GM12878 (cell line): ENCODE measurements at regions of chr14 and their contacts with region 1.

Region 1: GRCh38 chr14:54805521-54806322 is 96.9 kb downstream of the GCH1 start:
- DNase-seq: peak; percentile 27
- ATAC-seq: peak; percentile 96
- H3K4me3 ChIP-seq: no peak overlapping the region
- H3K27ac ChIP-seq: no peak overlapping the region
- H3K4me1 ChIP-seq: no peaks in the 10 kb centered on the region
- H3K27me3 ChIP-seq: no peaks in the 10 kb centered on the region
- CTCF ChIP-seq: peak; percentile 91 to 94 (median 93)
- EP300 ChIP-seq: no peak
- POLR2A ChIP-seq: no peak
- RAD21 ChIP-seq: peak; percentile 89

Region 2: DNA sequence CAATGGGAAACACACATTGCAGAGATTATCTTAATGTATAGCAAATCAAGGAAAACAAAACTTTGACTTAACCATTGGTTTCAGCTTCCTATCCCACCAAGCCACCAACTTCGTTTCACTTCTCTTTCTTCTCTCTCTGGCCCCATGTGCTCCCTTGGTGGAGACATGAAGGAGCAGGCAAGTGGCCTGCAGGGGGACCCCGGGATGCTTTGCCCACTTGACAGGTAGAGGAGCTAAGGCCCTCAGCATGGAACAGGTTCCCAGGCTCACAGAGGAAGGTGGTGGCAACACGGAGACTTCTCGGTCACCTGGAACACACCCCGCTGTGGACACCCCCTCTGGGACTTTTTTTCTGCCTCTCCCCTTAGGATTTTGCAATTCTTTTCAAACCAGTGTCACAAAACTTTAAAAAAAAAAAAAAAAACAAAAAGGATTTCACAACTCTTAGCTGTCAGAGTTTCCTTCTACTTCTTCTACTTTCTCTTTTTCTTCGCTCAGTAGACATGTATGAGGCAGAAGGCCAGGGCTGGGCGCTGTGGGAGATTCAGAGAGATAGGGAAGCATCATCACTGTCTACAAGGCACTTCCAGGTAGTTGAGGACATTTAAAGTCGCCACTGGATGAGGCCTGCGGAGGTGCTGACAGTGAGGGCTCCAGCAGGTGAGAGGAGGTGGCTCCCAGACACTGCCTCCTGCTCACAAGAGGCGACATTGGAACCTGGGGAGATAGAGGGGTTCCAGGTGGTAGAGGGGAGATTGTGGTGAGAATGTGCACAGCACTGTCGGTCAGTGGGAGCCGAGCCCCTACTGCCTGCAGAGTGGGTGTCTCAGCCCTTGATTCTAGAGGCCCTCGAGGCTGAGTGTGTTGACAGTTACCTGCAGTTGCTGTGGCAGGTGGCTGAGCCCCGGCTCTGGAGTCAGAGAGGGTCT is 22.7 kb before region 1 on chr14:
- CTCF ChIA-PET with region 1: interaction called, 11 read pairs
- POLR2A ChIA-PET with region 1: no interaction called
- RAD21 ChIA-PET with region 1: interaction called, 6 read pairs
- SMC1A ChIA-PET with region 1: interaction called, 5 read pairs
- in situ Hi-C with region 1: no loop called
- intact Hi-C with region 1: loop called (anchors 2 kb)
- DNase-seq: no peak
- ATAC-seq: peak; percentile 99
- H3K4me3 ChIP-seq: no peak overlapping the region
- H3K27ac ChIP-seq: no peak overlapping the region
- H3K4me1 ChIP-seq: peaks cover 10% of the 10 kb centered on the region
- H3K27me3 ChIP-seq: no peaks in the 10 kb centered on the region
- CTCF ChIP-seq: peak; percentile 59 to 76 (median 66)
- EP300 ChIP-seq: 0 out of 4 replicates have a peak, but pooled peaks of 1 of the 2 experiments have one; percentile 42
- POLR2A ChIP-seq: no peak
- RAD21 ChIP-seq: peak; percentile 67

Region 3: DNA sequence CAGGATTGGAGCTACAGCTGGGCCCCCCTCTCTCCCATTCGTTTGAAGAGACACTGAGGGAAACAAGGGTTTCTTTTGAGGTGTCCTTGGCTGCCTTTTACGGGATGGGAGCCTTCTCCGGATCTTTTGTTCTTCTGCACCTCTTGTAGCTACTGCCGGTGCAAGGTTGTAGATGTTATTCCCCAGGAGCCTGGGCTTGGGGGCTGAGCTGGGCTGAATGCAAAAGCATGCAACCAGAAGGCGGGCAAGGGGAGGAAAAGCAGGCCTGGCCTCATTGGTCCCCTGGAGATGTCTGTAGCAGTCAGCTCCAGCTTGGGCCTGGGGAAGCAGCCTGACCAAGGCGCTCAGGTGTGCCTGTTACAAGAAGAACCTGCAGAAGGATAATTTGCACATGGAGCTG is 13.4 kb before region 1 on chr14:
- CTCF ChIA-PET with region 1: interaction called, 10 read pairs
- POLR2A ChIA-PET with region 1: no interaction called
- RAD21 ChIA-PET with region 1: no interaction called
- SMC1A ChIA-PET with region 1: interaction called, 3 read pairs
- in situ Hi-C with region 1: no loop called
- intact Hi-C with region 1: no loop called
- DNase-seq: no peak
- ATAC-seq: no peak
- H3K4me3 ChIP-seq: no peak overlapping the region
- H3K27ac ChIP-seq: no peak overlapping the region
- H3K4me1 ChIP-seq: no peaks in the 10 kb centered on the region
- H3K27me3 ChIP-seq: peaks cover 0 to 3% of the 10 kb centered on the region in 2 experiments; a peak in 1 of 4 replicates
- CTCF ChIP-seq: no peak
- EP300 ChIP-seq: no peak
- POLR2A ChIP-seq: no peak
- RAD21 ChIP-seq: no peak

Region 4: DNA sequence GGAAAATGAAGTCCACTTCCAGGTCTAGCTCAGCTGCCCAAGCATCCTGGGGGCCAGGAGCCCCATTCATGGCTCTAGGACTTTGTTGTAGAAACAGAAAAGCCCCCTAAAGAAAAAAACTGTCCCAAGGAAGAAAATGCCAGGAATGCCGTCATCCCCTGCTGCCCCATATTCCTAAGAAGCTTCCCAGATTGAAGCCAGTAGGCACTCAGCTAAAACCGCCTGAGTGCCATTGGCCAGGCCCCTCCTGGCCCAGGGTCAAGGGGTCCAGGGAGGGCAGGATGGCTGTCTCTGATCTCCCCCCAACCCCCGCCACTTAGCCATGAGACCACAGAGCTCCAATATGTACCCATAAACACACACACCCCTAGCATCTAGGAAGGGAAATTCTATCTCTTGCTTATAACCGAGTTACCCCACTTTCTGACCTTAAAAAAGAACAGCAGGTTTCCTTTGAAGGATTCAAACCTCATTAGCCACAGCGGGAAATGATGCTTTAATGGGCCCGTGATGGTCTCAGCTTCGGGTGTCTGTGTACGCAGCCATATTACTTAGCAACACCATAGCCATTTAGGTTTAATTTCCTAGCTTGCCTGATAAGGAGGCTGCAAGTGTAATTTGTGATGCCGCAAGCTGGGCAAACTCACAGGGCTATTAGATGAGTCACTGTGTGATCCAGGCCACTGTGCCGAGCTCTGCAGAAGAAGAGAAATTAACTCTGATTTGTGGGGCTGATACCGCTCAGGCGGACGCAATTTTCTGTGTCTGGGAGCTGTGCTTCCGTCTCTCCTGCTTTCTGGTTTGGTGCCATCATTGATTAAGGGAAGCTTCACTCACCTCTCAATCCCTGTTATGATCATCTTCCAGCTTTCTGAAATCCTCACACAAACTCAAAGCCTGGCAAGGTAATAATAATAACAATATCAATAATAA is 12.7 kb after region 1 on chr14:
- CTCF ChIA-PET with region 1: interaction called, 11 read pairs
- POLR2A ChIA-PET with region 1: no interaction called
- RAD21 ChIA-PET with region 1: no interaction called
- SMC1A ChIA-PET with region 1: interaction called, 3 read pairs
- in situ Hi-C with region 1: no loop called
- intact Hi-C with region 1: no loop called
- DNase-seq: no peak
- ATAC-seq: no peak
- H3K4me3 ChIP-seq: no peak overlapping the region
- H3K27ac ChIP-seq: no peak overlapping the region
- H3K4me1 ChIP-seq: no peaks in the 10 kb centered on the region
- H3K27me3 ChIP-seq: no peaks in the 10 kb centered on the region; a peak in 1 of 4 replicates
- CTCF ChIP-seq: no peak
- EP300 ChIP-seq: no peak
- POLR2A ChIP-seq: no peak
- RAD21 ChIP-seq: no peak

Region 5: GRCh38 chr14:54881235-54881760 is 75.6 kb after region 1 on chr14:
- CTCF ChIA-PET with region 1: interaction called, 12 read pairs
- POLR2A ChIA-PET with region 1: no interaction called
- RAD21 ChIA-PET with region 1: interaction called, 4 read pairs
- SMC1A ChIA-PET with region 1: interaction called, 4 read pairs
- in situ Hi-C with region 1: no loop called
- intact Hi-C with region 1: no loop called
- DNase-seq: peak; percentile 87
- ATAC-seq: peak; percentile 77
- H3K4me3 ChIP-seq: peak overlapping the region; percentile 56
- H3K27ac ChIP-seq: peak overlapping the region; percentile 93
- H3K4me1 ChIP-seq: peaks cover 8% of the 10 kb centered on the region
- H3K27me3 ChIP-seq: no peaks in the 10 kb centered on the region
- CTCF ChIP-seq: peak in 1 of 3 experiments; percentile 18; a peak in 1 of 6 replicates
- EP300 ChIP-seq: no peak
- POLR2A ChIP-seq: no peak
- RAD21 ChIP-seq: no peak

Region 6: GRCh38 chr14:54893151-54893760 is 87.5 kb after region 1 on chr14:
- CTCF ChIA-PET with region 1: no interaction called
- POLR2A ChIA-PET with region 1: no interaction called
- RAD21 ChIA-PET with region 1: no interaction called
- SMC1A ChIA-PET with region 1: no interaction called
- in situ Hi-C with region 1: no loop called
- intact Hi-C with region 1: loop called (anchors 5 kb)
- DNase-seq: no peak
- ATAC-seq: peak; percentile 68
- H3K4me3 ChIP-seq: no peak overlapping the region
- H3K27ac ChIP-seq: no peak overlapping the region
- H3K4me1 ChIP-seq: peaks cover 25% of the 10 kb centered on the region
- H3K27me3 ChIP-seq: no peaks in the 10 kb centered on the region
- CTCF ChIP-seq: peak; percentile 55 to 78 (median 67)
- EP300 ChIP-seq: no peak
- POLR2A ChIP-seq: no peak
- RAD21 ChIP-seq: peak; percentile 53